ENCODE measurements at regions of chr6 and their contacts with region 1.

Region 1: DNA sequence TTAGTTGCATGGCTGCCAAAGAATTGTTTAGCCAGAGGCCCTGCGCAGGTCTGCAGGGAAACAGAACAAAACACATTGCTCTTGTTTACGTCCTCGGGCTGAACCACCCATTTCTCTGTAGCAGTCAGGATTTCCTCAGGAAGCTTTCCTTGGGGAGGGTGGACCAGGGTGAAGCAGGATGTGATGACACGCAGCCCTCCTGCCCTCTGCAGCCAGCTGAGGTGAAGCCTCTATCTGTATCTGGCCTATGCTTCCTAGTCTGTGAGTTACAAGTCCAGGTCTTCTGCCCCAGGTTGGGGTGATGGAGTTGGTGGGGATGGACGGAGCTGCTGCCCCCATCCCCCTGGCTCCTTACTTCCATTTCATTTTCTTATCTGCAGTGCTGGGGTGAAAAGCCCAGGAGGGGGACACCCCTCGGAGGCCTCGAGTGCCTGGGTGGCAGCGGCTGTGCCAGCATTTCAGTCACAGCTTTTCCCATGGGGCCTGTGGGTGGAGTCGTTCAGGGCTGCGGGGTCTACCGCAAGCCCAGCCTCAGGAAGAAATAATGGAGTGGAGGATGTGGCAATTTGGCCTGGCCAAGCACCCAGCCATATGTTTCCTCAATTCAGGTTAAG is 24.9 kb downstream of the SASH1 start:
- DNase-seq: peak; percentile 79

Region 2: GRCh38 chr6:148285205-148285604 is 82.3 kb before region 1 on chr6:
- intact Hi-C with region 1: no loop called
- DNase-seq: no peak

Region 3: GRCh38 chr6:148342357-148343046 is 25.0 kb before region 1 on chr6 and contains the start of gene SASH1:
- intact Hi-C with region 1: loop called (anchors 2 kb)
- DNase-seq: peak; percentile 78
- total RNA-seq, gene SASH1: 20.5 TPM

Region 4: DNA sequence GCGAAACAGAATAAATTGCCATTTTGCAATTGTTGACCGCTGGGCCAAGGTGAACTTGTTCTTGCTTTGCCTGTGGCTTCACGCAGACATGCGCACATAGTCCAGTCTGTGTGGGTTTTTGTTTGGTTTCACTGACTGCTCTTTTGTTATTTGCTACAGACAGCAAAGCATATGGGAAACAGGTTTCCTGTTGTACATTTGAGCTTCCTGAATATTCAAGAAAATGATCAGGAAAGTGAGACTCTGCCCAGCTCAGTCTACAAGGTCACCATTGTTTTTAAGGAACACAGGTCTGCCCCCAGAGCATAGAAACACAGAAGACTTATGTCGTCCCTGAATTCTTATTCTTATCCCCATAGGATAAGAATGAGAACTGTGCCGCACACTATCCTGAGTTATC is 30.7 kb after region 1 on chr6:
- intact Hi-C with region 1: loop called (anchors 2 kb)
- DNase-seq: no peak

Region 5: DNA sequence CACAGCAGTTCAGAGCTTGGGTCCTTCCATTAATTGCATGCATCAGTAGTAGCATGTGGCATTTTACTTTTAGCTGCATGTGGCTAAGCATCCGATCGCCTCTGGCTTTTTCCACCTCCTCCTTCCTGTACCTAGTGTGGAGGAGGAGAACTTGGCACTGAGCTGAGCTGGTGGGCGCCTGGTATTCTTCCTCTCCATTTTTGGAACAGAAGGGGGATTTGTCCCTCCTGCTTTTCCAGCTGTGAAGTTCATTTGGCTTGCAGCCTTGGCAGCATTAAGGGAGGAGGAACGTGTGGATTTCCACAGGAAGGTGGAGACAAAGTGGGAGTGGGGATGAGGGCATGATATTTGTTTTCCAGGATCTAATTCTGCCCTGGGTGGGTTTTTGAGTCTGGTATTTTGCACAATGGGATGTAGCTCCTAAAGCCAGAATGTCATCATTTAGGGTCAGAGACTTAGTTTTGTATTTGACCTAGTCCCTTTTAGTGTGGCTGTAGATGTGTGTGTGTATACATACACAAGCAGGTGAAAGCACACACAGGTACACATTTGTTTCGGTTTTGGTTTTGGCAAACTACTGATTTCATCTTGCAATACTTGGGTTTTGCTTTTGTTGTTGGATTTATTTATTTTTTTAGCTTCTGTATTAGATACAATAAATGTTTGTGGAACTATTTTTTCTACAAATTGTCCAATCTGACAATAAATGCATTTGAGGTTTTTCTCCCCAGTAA is 65.1 kb after region 1 on chr6:
- intact Hi-C with region 1: loop called (anchors 10 kb)
- DNase-seq: no peak

Region 6: DNA sequence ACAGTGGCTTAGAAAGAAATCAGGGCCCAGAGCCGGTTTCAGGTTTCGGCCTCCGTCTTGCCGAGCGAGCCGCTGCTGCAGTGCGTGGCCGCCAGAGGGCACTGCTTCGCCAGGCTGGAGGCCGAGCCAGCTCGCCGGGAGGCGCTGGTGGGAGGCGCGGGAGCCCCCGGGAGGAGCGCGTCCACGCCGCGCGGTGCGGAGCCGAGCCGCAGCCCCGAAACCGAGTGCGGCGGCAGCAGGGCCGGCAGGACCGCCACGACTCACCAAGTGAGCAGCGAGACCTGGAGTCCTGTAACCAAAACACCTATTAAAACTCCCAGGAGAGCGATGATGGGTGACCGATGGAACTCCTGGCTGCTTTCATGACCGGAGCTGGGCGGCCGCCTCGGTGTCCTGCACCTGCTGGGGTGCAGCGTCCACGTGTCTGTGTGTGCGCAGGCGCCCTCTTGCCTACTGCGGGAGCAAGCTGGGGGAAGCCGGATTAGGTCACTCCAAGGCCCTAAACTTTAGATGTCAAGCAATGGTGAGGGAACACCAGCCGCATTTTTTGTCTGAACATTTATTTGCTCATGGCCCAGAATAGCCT is 192.4 kb after region 1 on chr6:
- intact Hi-C with region 1: no loop called
- DNase-seq: peak; percentile 89

Measured in cardiac septum (tissue), 1 donor.